AG04450 (cell line): ENCODE measurements at regions of chr2 and their contacts with region 1.

Region 1: GRCh38 chr2:65169760-65170136 is 39.8 kb upstream of the RAB1A start:
- DNase-seq: no peak
- H3K4me3 ChIP-seq: no peak overlapping the region
- H3K27ac ChIP-seq: no peak overlapping the region
- H3K27me3 ChIP-seq: no peaks in the 10 kb centered on the region
- CTCF ChIP-seq: no peak

Region 2: GRCh38 chr2:65057391-65058052 is 112.2 kb before region 1 on chr2:
- CTCF ChIA-PET with region 1: no interaction called
- POLR2A ChIA-PET with region 1: no interaction called
- DNase-seq: no peak
- H3K4me3 ChIP-seq: peak overlapping the region; percentile 74
- H3K27ac ChIP-seq: no peak overlapping the region
- H3K27me3 ChIP-seq: no peaks in the 10 kb centered on the region
- CTCF ChIP-seq: no peak

Region 3: GRCh38 chr2:65142515-65142914 is 27.2 kb before region 1 on chr2:
- CTCF ChIA-PET with region 1: interaction called, 11 read pairs
- POLR2A ChIA-PET with region 1: no interaction called
- DNase-seq: no peak
- H3K4me3 ChIP-seq: no peak overlapping the region
- H3K27ac ChIP-seq: no peak overlapping the region
- H3K27me3 ChIP-seq: peaks cover 4% of the 10 kb centered on the region
- CTCF ChIP-seq: no peak

Region 4: GRCh38 chr2:65396348-65397026 is 226.7 kb after region 1 on chr2:
- CTCF ChIA-PET with region 1: no interaction called
- POLR2A ChIA-PET with region 1: no interaction called
- DNase-seq: no peak
- H3K4me3 ChIP-seq: no peak overlapping the region
- H3K27ac ChIP-seq: peak overlapping the region; percentile 22
- H3K27me3 ChIP-seq: no peaks in the 10 kb centered on the region
- CTCF ChIP-seq: no peak

Region 5: DNA sequence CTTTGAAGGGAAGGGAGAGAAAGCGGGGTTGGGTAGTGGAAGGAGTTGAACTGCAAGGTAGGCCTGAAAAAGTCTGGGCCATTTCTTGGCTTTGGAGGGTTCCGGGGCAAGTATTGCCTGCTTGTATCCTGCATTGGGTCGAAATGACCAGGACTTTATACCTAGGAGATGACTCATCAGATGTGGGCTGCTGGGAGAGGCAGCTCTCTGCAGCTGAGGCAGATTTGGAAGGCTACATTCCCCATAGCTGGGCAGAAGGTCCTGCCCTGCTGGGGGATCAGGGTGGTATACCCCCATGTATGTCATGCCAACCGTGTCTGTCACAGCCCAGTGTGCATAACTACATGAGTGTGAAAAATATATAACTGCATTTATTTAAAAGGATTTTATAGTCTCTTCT is 434.5 kb after region 1 on chr2:
- CTCF ChIA-PET with region 1: no interaction called
- POLR2A ChIA-PET with region 1: no interaction called
- DNase-seq: no peak
- H3K4me3 ChIP-seq: no peak overlapping the region
- H3K27ac ChIP-seq: no peak overlapping the region
- H3K27me3 ChIP-seq: peaks cover 8% of the 10 kb centered on the region
- CTCF ChIP-seq: no peak